ENCODE measurements at regions of chr5 and their contacts with region 1.

Region 1: DNA sequence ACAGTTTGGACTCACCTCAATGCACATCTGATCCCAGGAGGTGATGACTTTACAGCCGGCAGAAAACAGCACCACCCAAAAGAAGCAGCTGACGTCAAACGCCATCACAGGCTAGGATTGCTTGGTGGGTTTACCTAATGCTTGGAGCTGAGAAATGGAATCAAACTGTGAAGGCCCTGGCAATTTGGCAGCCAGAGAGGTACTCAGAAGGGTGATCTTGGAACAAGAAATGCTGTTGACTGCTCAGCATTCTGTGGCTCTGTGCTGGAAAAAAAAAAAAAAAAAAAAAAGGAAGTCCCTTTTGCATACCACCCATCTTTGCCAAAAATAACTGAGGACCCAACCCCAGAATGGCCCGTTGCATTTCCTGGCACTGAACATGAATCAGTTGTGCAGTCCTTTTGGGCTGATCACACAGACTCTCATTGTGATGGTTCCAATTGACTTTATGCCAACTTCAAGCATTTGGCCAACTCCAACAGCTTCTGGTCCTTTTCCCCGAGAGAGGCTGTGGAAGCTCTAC is at the start of gene CD180:
- DNase-seq: peak; percentile 65
- ATAC-seq: peak; percentile 54
- H3K4me3 ChIP-seq: peak within 1 kb of the TSS; percentile 63 to 95 (median 74)
- H3K4me3 Mint-ChIP-seq: peak within 1 kb of the TSS; percentile 91
- H3K27ac ChIP-seq: peak within 1 kb of the TSS; percentile 87 to 98
- H3K27ac Mint-ChIP-seq: peak within 1 kb of the TSS; percentile 97
- H3K4me1 ChIP-seq: peaks cover 60 to 76% of the 10 kb centered on the region in 2 donors
- H3K4me1 Mint-ChIP-seq: peaks cover 96% of the 10 kb centered on the region
- H3K27me3 ChIP-seq: no peaks in the 10 kb centered on the region
- H3K27me3 Mint-ChIP-seq: no peaks in the 10 kb centered on the region
- CTCF ChIP-seq: no peak
- total RNA-seq, gene CD180: 16.4 and 18.0 TPM in 2 replicates

Region 2: DNA sequence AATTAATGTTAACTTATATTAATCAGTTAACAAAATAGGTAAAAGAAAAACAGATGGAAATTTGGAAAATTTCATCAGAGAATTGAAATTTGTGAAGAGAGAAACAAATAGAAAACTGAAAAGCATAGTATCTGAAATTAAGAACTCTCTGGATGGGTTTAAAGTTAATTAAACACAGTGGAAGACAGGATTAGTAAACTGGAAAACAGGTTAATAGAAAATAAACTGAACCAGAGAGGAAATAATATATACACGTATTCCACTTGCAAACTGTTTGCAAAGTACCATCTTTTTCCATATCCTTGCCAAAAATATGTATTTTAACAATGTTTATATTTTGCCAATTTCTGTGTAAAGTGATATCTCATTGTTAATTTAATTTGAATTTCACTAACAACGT is 257.5 kb before region 1 on chr5:
- CTCF ChIA-PET with region 1: no interaction called
- POLR2A ChIA-PET with region 1: no interaction called
- intact Hi-C with region 1: no loop called
- DNase-seq: no peak
- ATAC-seq: no peak
- H3K4me3 ChIP-seq: no peak overlapping the region
- H3K4me3 Mint-ChIP-seq: no peak overlapping the region
- H3K27ac ChIP-seq: no peak overlapping the region
- H3K27ac Mint-ChIP-seq: no peak overlapping the region
- H3K4me1 ChIP-seq: no peaks in the 10 kb centered on the region
- H3K4me1 Mint-ChIP-seq: no peaks in the 10 kb centered on the region
- H3K27me3 ChIP-seq: no peaks in the 10 kb centered on the region
- H3K27me3 Mint-ChIP-seq: peaks cover 4% of the 10 kb centered on the region
- CTCF ChIP-seq: no peak

Region 3: GRCh38 chr5:67123819-67124218 is 72.8 kb before region 1 on chr5:
- CTCF ChIA-PET with region 1: no interaction called
- POLR2A ChIA-PET with region 1: no interaction called
- intact Hi-C with region 1: no loop called
- DNase-seq: no peak
- ATAC-seq: no peak
- H3K4me3 ChIP-seq: no peak overlapping the region
- H3K4me3 Mint-ChIP-seq: no peak overlapping the region
- H3K27ac ChIP-seq: no peak overlapping the region
- H3K27ac Mint-ChIP-seq: no peak overlapping the region
- H3K4me1 ChIP-seq: no peaks in the 10 kb centered on the region
- H3K4me1 Mint-ChIP-seq: peaks cover 8% of the 10 kb centered on the region
- H3K27me3 ChIP-seq: no peaks in the 10 kb centered on the region
- H3K27me3 Mint-ChIP-seq: no peaks in the 10 kb centered on the region
- CTCF ChIP-seq: no peak

Region 4: GRCh38 chr5:67156976-67157583 is 39.5 kb before region 1 on chr5:
- CTCF ChIA-PET with region 1: interaction called, 582 read pairs
- POLR2A ChIA-PET with region 1: interaction called, 17 read pairs
- intact Hi-C with region 1: no loop called
- DNase-seq: peak; percentile 69
- ATAC-seq: peak; percentile 69
- H3K4me3 ChIP-seq: no peak overlapping the region
- H3K4me3 Mint-ChIP-seq: no peak overlapping the region
- H3K27ac ChIP-seq: no peak overlapping the region
- H3K27ac Mint-ChIP-seq: peak overlapping the region; percentile 46
- H3K4me1 ChIP-seq: peaks cover 3 to 6% of the 10 kb centered on the region in 2 donors
- H3K4me1 Mint-ChIP-seq: peaks cover 17% of the 10 kb centered on the region
- H3K27me3 ChIP-seq: no peaks in the 10 kb centered on the region
- H3K27me3 Mint-ChIP-seq: no peaks in the 10 kb centered on the region
- CTCF ChIP-seq: peak; percentile 95

Region 5: GRCh38 chr5:67165526-67166459 is 30.8 kb before region 1 on chr5:
- CTCF ChIA-PET with region 1: interaction called, 582 read pairs
- POLR2A ChIA-PET with region 1: interaction called, 17 read pairs
- intact Hi-C with region 1: no loop called
- DNase-seq: peak; percentile 87
- ATAC-seq: peak; percentile 83
- H3K4me3 ChIP-seq: peak overlapping the region in 4 of 5 experiments; percentile 38 to 63 (median 55)
- H3K4me3 Mint-ChIP-seq: peak overlapping the region; percentile 89
- H3K27ac ChIP-seq: peak overlapping the region; percentile 78 to 83
- H3K27ac Mint-ChIP-seq: peak overlapping the region; percentile 97
- H3K4me1 ChIP-seq: peaks cover 26 to 34% of the 10 kb centered on the region in 2 donors
- H3K4me1 Mint-ChIP-seq: peaks cover 27% of the 10 kb centered on the region
- H3K27me3 ChIP-seq: no peaks in the 10 kb centered on the region
- H3K27me3 Mint-ChIP-seq: no peaks in the 10 kb centered on the region
- CTCF ChIP-seq: peak; percentile 80

Region 6: DNA sequence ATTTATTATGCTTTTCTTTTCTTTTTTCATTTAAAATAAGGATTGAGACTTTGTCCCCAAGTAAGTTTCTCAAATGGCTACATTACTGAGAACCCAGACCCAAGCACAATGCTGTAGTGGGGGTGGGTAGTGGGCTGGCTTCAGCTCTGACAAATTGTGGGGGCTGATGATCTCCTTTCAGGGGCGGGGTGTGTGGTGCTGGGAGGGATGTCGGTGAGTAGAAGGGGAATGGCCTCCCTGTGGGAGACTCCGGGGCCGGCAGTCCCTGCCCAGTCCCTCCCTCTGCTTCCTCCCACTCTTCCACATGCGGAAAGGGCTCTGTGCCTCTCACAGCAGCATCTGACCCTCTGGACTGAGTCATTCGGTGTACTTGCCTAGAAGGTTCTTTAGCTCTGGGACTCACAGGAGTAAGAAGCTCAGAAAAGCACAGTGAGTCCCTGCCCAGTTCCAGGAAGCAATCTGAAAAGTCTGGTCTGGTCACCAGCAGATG is 14.3 kb before region 1 on chr5:
- CTCF ChIA-PET with region 1: interaction called, 3 read pairs
- POLR2A ChIA-PET with region 1: interaction called, 3 read pairs
- intact Hi-C with region 1: loop called (anchors 1 kb)
- DNase-seq: no peak
- ATAC-seq: no peak
- H3K4me3 ChIP-seq: no peak overlapping the region
- H3K4me3 Mint-ChIP-seq: no peak overlapping the region
- H3K27ac ChIP-seq: peak overlapping the region in 1 of 2 donors; percentile 54
- H3K27ac Mint-ChIP-seq: peak overlapping the region; percentile 55
- H3K4me1 ChIP-seq: peaks cover 69 to 74% of the 10 kb centered on the region in 2 donors
- H3K4me1 Mint-ChIP-seq: peaks cover 67% of the 10 kb centered on the region
- H3K27me3 ChIP-seq: no peaks in the 10 kb centered on the region
- H3K27me3 Mint-ChIP-seq: no peaks in the 10 kb centered on the region
- CTCF ChIP-seq: no peak

Region 7: DNA sequence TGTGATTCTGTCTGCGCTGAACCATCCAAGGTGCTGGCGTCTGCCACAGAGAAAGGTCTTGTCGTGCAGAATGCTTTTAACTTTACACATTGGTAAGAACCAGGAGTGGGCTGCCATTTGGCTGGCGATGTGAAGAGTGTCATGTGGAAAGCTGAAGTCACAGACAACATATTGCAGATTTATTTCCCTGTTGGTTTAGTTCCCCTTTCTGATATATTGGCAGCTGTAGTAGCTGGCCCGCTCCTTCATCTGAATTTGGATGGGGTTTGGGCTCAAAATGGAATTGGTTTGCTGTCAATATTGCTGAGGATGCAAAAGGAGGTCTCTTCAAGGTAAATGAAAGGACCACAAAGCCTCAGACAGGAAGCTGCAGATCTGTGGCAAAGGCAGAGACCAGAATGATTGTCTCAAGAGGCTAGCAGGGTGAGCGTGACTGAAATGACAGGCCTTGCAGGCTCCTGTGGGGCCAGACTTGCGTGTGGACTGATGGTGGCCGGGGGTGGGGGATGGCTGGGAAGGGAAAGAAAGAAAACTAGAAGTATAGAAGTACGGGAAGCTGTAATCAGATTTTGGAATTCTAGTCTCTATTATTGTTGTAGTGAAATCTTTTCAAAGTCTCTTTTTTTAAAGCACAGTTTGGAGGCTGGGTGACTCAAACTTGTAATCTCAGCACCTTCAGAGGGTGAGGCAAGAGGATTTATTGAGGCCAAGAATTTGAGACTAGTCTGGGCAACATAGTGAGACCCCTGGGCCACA is 25.1 kb after region 1 on chr5:
- CTCF ChIA-PET with region 1: interaction called, 3 read pairs
- POLR2A ChIA-PET with region 1: interaction called, 12 read pairs
- intact Hi-C with region 1: no loop called
- DNase-seq: peak; percentile 71
- ATAC-seq: peak; percentile 70
- H3K4me3 ChIP-seq: peak overlapping the region in 4 of 5 experiments; percentile 23 to 59 (median 42)
- H3K4me3 Mint-ChIP-seq: peak overlapping the region; percentile 87
- H3K27ac ChIP-seq: peak overlapping the region; percentile 61 to 71
- H3K27ac Mint-ChIP-seq: peak overlapping the region; percentile 97
- H3K4me1 ChIP-seq: peaks cover 41 to 48% of the 10 kb centered on the region in 2 donors
- H3K4me1 Mint-ChIP-seq: peaks cover 53% of the 10 kb centered on the region
- H3K27me3 ChIP-seq: no peaks in the 10 kb centered on the region
- H3K27me3 Mint-ChIP-seq: no peaks in the 10 kb centered on the region
- CTCF ChIP-seq: no peak

Region 8: DNA sequence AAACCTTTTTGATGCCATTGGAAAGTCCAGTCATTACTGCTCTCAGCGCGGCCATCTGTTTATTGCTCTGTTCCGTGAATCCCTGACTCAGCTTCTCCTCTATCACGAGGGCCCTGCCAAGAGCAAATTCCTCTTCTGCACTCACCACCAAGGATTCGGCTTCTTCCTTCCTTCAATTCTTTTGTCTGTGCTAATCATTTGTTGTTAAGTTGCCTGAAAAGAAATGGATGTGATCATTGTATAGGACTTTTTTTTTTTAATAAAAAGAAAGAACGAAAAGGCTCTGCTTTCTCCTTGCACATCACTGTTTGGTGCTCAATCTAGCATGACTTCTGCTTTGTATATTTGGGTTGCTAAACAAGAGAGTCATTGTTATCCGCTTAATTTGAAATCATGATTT is 890.3 kb after region 1 on chr5:
- CTCF ChIA-PET with region 1: no interaction called
- POLR2A ChIA-PET with region 1: no interaction called
- intact Hi-C with region 1: no loop called
- DNase-seq: no peak
- ATAC-seq: no peak
- H3K4me3 ChIP-seq: no peak overlapping the region
- H3K4me3 Mint-ChIP-seq: no peak overlapping the region
- H3K27ac ChIP-seq: no peak overlapping the region
- H3K27ac Mint-ChIP-seq: no peak overlapping the region
- H3K4me1 ChIP-seq: no peaks in the 10 kb centered on the region
- H3K4me1 Mint-ChIP-seq: no peaks in the 10 kb centered on the region
- H3K27me3 ChIP-seq: no peaks in the 10 kb centered on the region
- H3K27me3 Mint-ChIP-seq: no peaks in the 10 kb centered on the region
- CTCF ChIP-seq: no peak

Region 9: GRCh38 chr5:68433923-68434879 is 1237.6 kb after region 1 on chr5:
- CTCF ChIA-PET with region 1: no interaction called
- POLR2A ChIA-PET with region 1: no interaction called
- intact Hi-C with region 1: loop called (anchors 10 kb)
- DNase-seq: peak; percentile 84
- ATAC-seq: peak; percentile 97
- H3K4me3 ChIP-seq: peak overlapping the region in 4 of 5 experiments; percentile 12 to 29 (median 14)
- H3K4me3 Mint-ChIP-seq: peak overlapping the region; percentile 78
- H3K27ac ChIP-seq: peak overlapping the region; percentile 50 to 64
- H3K27ac Mint-ChIP-seq: peak overlapping the region; percentile 89
- H3K4me1 ChIP-seq: peaks cover 28 to 30% of the 10 kb centered on the region in 2 donors
- H3K4me1 Mint-ChIP-seq: peaks cover 33% of the 10 kb centered on the region
- H3K27me3 ChIP-seq: no peaks in the 10 kb centered on the region
- H3K27me3 Mint-ChIP-seq: no peaks in the 10 kb centered on the region
- CTCF ChIP-seq: no peak